ENCODE measurements at regions of chr1 and their contacts with region 1.

Region 1: GRCh38 chr1:79197421-79197820 is 190.9 kb upstream of the ADGRL4 start:
- H3K4me3 Mint-ChIP-seq: no peak overlapping the region
- H3K27ac Mint-ChIP-seq: no peak overlapping the region
- H3K4me1 Mint-ChIP-seq: no peaks in the 10 kb centered on the region
- H3K27me3 Mint-ChIP-seq: no peaks in the 10 kb centered on the region

Region 2: GRCh38 chr1:78839704-78840277 is 357.6 kb before region 1 on chr1:
- intact Hi-C with region 1: loop called (anchors 5 kb)
- H3K4me3 Mint-ChIP-seq: no peak overlapping the region
- H3K27ac Mint-ChIP-seq: no peak overlapping the region
- H3K4me1 Mint-ChIP-seq: peaks cover 5% of the 10 kb centered on the region
- H3K27me3 Mint-ChIP-seq: no peaks in the 10 kb centered on the region

Region 3: GRCh38 chr1:79100385-79100784 is 97.0 kb before region 1 on chr1:
- intact Hi-C with region 1: no loop called
- H3K4me3 Mint-ChIP-seq: no peak overlapping the region
- H3K27ac Mint-ChIP-seq: no peak overlapping the region
- H3K4me1 Mint-ChIP-seq: no peaks in the 10 kb centered on the region
- H3K27me3 Mint-ChIP-seq: no peaks in the 10 kb centered on the region

Region 4: DNA sequence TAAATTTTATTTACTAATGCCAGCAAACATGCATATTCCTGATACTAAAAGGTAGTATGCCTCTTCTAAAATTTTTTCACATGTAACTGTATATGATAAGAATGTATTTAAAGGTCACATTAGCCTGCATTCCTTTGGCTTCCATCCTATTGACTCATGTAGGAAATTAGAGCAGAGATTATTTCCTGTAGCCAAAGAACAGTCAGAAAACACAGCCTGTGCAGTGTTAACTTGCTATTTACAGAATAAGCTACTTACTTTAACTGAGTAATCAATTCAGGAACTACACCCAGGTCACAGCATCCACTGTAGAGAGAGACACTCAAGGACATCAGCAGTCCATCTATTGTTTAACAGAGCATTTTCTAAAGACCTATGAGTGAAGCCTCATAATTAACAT is 36.3 kb before region 1 on chr1:
- intact Hi-C with region 1: no loop called
- H3K4me3 Mint-ChIP-seq: no peak overlapping the region
- H3K27ac Mint-ChIP-seq: no peak overlapping the region
- H3K4me1 Mint-ChIP-seq: no peaks in the 10 kb centered on the region
- H3K27me3 Mint-ChIP-seq: no peaks in the 10 kb centered on the region

Measured in dendritic cell treated with granulocyte-macrophage colony-stimulating factor and Interleukin-4, amounts not matched to agents 40 ng/mL and 50 ng/mL, for 4 days (primary cell).